Activated CD4-positive, alpha-beta memory T cell treated with anti-CD3 and anti-CD28 coated beads, Interleukin-2, amount 10 ng/mL, durations not matched to agents 7 days and 5 days (primary cell): ENCODE measurements at regions of chr17 and their contacts with region 1.

Region 1: DNA sequence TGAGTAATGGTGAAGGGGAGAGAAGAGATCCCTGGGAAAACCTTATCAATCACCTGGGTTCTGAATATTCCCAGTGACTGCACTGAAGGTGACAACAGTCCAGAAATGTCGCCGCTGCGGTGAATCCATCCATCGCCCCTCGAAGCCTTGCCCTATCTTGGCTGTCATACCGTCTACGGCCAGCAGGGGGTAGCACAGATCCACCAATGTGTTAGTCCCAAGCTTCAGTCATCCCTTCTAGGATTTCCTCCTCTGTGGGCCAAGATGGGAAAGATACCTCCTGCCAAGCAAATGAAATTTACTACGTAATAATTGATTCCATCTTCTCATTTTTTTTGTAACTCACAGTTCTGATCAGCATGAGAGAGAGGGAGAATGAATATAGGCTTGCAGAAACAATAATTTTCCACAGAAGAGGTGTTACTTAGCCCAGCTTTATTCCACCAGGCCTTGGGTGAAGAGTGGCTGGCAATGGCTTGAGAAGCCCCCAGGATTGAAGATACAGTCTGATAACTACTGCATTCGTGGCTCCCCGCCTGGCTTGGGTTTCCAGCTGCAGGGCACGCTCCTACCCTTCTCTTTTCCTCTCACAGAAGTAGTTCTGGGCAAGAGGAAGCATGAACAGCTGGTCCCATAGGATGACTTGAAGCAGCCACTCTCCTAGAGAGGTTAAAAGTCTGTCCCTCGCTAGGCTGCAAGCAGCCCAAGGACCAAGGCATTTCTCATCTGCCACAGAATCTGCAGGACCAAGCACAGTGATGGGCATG is 2.6 kb upstream of the FMNL1 start:
- DNase-seq: peak; percentile 86
- H3K4me3 Mint-ChIP-seq: peak overlapping the region; percentile 85
- H3K27ac Mint-ChIP-seq: peak overlapping the region; percentile 75
- H3K4me1 Mint-ChIP-seq: peaks cover 30% of the 10 kb centered on the region
- H3K27me3 Mint-ChIP-seq: no peaks in the 10 kb centered on the region

Region 2: GRCh38 chr17:45148183-45149036 is 70.7 kb before region 1 on chr17 and contains the start of gene HEXIM1:
- CTCF ChIA-PET with region 1: interaction called, 26 read pairs
- POLR2A ChIA-PET with region 1: interaction called, 37 read pairs
- DNase-seq: peak; percentile 99
- H3K4me3 Mint-ChIP-seq: peak within 1 kb of the TSS; percentile 97
- H3K27ac Mint-ChIP-seq: peak within 1 kb of the TSS; percentile 98
- H3K4me1 Mint-ChIP-seq: peaks cover 45% of the 10 kb centered on the region
- H3K27me3 Mint-ChIP-seq: no peaks in the 10 kb centered on the region
- total RNA-seq, gene HEXIM1: 35.0 to 35.8 TPM

Region 3: GRCh38 chr17:45235416-45236281 is 16.6 kb after region 1 on chr17:
- CTCF ChIA-PET with region 1: interaction called, 197 read pairs
- POLR2A ChIA-PET with region 1: interaction called, 528 read pairs
- DNase-seq: peak; percentile 79
- H3K4me3 Mint-ChIP-seq: no peak overlapping the region
- H3K27ac Mint-ChIP-seq: peak overlapping the region; percentile 74
- H3K4me1 Mint-ChIP-seq: peaks cover 67% of the 10 kb centered on the region
- H3K27me3 Mint-ChIP-seq: no peaks in the 10 kb centered on the region

Region 4: GRCh38 chr17:45261577-45262515 is 42.8 kb after region 1 on chr17 and contains the start of gene SPATA32:
- CTCF ChIA-PET with region 1: interaction called, 18 read pairs
- POLR2A ChIA-PET with region 1: interaction called, 528 read pairs
- DNase-seq: peak; percentile 75
- H3K4me3 Mint-ChIP-seq: peak within 1 kb of the TSS; percentile 70
- H3K27ac Mint-ChIP-seq: peak within 1 kb of the TSS; percentile 61
- H3K4me1 Mint-ChIP-seq: peaks cover 22% of the 10 kb centered on the region
- H3K27me3 Mint-ChIP-seq: no peaks in the 10 kb centered on the region
- total RNA-seq, gene SPATA32: 0.20 to 0.23 TPM

Region 5: GRCh38 chr17:45307290-45308015 is 88.4 kb after region 1 on chr17:
- CTCF ChIA-PET with region 1: interaction called, 10 read pairs
- POLR2A ChIA-PET with region 1: interaction called, 337 read pairs
- DNase-seq: peak; percentile 51
- H3K4me3 Mint-ChIP-seq: no peak overlapping the region
- H3K27ac Mint-ChIP-seq: peak overlapping the region; percentile 75
- H3K4me1 Mint-ChIP-seq: peaks cover 86% of the 10 kb centered on the region
- H3K27me3 Mint-ChIP-seq: no peaks in the 10 kb centered on the region